ENCODE measurements at regions of chr11 and their contacts with region 1.

Region 1: GRCh38 chr11:18115360-18116127 is 9.7 kb upstream of the SAAL1 start:
- DNase-seq: no peak

Region 2: GRCh38 chr11:18731949-18732821 is 616.6 kb after region 1 on chr11:
- intact Hi-C with region 1: loop called (anchors 5 kb)
- DNase-seq: no peak